ENCODE measurements at regions of chr1 and their contacts with region 1.

Region 1: GRCh38 chr1:209784265-209785169 is at the start of gene C1orf74:
- DNase-seq: peak; percentile 99
- H3K4me3 Mint-ChIP-seq: peak within 1 kb of the TSS; percentile 90
- H3K27ac Mint-ChIP-seq: peak within 1 kb of the TSS; percentile 91
- H3K4me1 Mint-ChIP-seq: peaks cover 61% of the 10 kb centered on the region
- H3K27me3 Mint-ChIP-seq: no peaks in the 10 kb centered on the region
- total RNA-seq, gene C1orf74: 2.1 to 2.2 TPM

Region 2: GRCh38 chr1:209736490-209737117 is 47.9 kb before region 1 on chr1:
- CTCF ChIA-PET with region 1: no interaction called
- POLR2A ChIA-PET with region 1: no interaction called
- DNase-seq: no peak
- H3K4me3 Mint-ChIP-seq: no peak overlapping the region
- H3K27ac Mint-ChIP-seq: no peak overlapping the region
- H3K4me1 Mint-ChIP-seq: peaks cover 29% of the 10 kb centered on the region
- H3K27me3 Mint-ChIP-seq: no peaks in the 10 kb centered on the region

Region 3: DNA sequence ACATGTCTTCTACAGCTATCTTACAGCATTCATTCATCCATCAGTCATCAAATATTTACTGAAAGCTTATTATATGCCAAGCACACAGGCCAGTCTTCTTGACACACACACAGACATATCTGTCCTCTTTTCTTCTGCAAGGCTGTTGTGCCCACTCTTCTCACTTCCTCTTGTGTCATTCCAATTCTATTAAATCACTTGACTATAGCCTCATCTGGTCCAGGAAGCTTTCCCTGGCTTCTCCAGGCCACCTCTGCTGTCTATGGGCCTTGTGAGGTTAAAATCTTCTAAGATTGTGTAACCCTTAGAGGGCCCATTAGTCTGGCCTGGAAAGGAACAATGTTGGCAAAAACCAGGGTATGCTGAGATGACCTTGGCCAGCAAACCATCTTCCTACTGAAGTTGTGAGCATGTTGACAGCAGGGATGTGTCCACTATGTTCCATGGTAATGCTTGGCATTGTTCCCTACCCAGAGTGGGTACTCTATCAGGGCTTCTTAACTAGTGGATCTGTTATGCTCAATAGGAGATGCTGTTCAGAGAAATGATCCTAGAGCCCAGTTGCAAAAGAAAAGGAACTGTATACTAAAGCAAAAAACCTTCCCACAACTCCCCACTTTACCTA is 23.4 kb before region 1 on chr1:
- CTCF ChIA-PET with region 1: interaction called, 3 read pairs
- POLR2A ChIA-PET with region 1: interaction called, 799 read pairs
- DNase-seq: no peak
- H3K4me3 Mint-ChIP-seq: peak overlapping the region; percentile 58
- H3K27ac Mint-ChIP-seq: peak overlapping the region; percentile 50
- H3K4me1 Mint-ChIP-seq: peaks cover 77% of the 10 kb centered on the region
- H3K27me3 Mint-ChIP-seq: no peaks in the 10 kb centered on the region

Region 4: GRCh38 chr1:209769171-209769904 is 15.2 kb before region 1 on chr1:
- CTCF ChIA-PET with region 1: interaction called, 25 read pairs
- POLR2A ChIA-PET with region 1: interaction called, 218 read pairs
- DNase-seq: peak; percentile 87
- H3K4me3 Mint-ChIP-seq: no peak overlapping the region
- H3K27ac Mint-ChIP-seq: no peak overlapping the region
- H3K4me1 Mint-ChIP-seq: peaks cover 37% of the 10 kb centered on the region
- H3K27me3 Mint-ChIP-seq: no peaks in the 10 kb centered on the region

Region 5: GRCh38 chr1:210089846-210090245 is 305.3 kb after region 1 on chr1:
- CTCF ChIA-PET with region 1: no interaction called
- POLR2A ChIA-PET with region 1: no interaction called
- DNase-seq: no peak
- H3K4me3 Mint-ChIP-seq: no peak overlapping the region
- H3K27ac Mint-ChIP-seq: no peak overlapping the region
- H3K4me1 Mint-ChIP-seq: no peaks in the 10 kb centered on the region
- H3K27me3 Mint-ChIP-seq: no peaks in the 10 kb centered on the region